ENCODE measurements at regions of chr15 and their contacts with region 1.

Region 1: GRCh38 chr15:35673093-35673684 is 127.2 kb upstream of the DPH6 start:
- DNase-seq: peak; percentile 58
- H3K4me3 Mint-ChIP-seq: peak overlapping the region; percentile 36
- H3K27ac Mint-ChIP-seq: no peak overlapping the region
- H3K4me1 Mint-ChIP-seq: peaks cover 8% of the 10 kb centered on the region
- H3K27me3 Mint-ChIP-seq: no peaks in the 10 kb centered on the region

Region 2: DNA sequence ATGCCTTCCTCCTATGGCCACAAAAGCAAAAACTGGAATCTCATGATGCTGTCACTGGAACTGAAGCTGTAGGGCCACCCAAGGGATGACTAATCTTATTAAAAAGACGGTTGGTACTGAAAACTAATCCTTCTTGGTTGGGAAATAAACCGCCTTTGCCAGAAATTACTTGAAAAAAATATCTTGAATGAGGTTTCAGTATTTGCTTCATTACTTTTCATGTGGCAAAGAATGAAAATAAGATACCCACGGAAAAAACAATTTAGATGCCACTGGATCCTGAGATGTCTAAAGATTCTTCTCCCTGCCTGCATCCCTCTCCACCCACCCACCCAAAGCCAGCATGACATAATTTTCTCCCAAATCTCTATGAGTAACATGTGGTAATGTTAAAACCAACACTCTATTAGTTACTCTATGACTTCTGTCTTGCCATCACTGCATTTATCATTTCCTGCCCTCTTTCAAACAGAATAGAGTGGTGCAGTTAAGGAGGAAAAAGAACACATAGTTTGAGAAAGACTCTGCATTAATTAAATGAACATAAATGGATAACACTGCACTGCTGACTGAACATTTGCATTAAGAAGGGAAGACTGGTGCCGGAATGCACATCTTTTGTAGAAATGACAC is 15.4 kb before region 1 on chr15:
- intact Hi-C with region 1: loop called (anchors 2 kb)
- DNase-seq: no peak
- H3K4me3 Mint-ChIP-seq: no peak overlapping the region
- H3K27ac Mint-ChIP-seq: peak overlapping the region; percentile 52
- H3K4me1 Mint-ChIP-seq: peaks cover 5% of the 10 kb centered on the region
- H3K27me3 Mint-ChIP-seq: peaks cover 11% of the 10 kb centered on the region

Region 3: GRCh38 chr15:35886765-35887164 is 213.6 kb after region 1 on chr15:
- intact Hi-C with region 1: no loop called
- DNase-seq: no peak
- H3K4me3 Mint-ChIP-seq: no peak overlapping the region
- H3K27ac Mint-ChIP-seq: no peak overlapping the region
- H3K4me1 Mint-ChIP-seq: no peaks in the 10 kb centered on the region
- H3K27me3 Mint-ChIP-seq: no peaks in the 10 kb centered on the region

Measured in activated CD4-positive, alpha-beta T cell treated with anti-CD3 and anti-CD28 coated beads, Interleukin-2, amount 10 ng/mL, durations not matched to agents 24 days and 14 days (primary cell).